ENCODE measurements at regions of chr1 and their contacts with region 1.

Region 1: GRCh38 chr1:204128964-204129896 is 22.6 kb downstream of the ETNK2 start:
- DNase-seq: peak; percentile 86
- H3K4me3 Mint-ChIP-seq: peak overlapping the region; percentile 68
- H3K27ac Mint-ChIP-seq: peak overlapping the region; percentile 63
- H3K4me1 Mint-ChIP-seq: peaks cover 58% of the 10 kb centered on the region
- H3K27me3 Mint-ChIP-seq: no peaks in the 10 kb centered on the region
- CTCF ChIP-seq: peak; percentile 100

Region 2: DNA sequence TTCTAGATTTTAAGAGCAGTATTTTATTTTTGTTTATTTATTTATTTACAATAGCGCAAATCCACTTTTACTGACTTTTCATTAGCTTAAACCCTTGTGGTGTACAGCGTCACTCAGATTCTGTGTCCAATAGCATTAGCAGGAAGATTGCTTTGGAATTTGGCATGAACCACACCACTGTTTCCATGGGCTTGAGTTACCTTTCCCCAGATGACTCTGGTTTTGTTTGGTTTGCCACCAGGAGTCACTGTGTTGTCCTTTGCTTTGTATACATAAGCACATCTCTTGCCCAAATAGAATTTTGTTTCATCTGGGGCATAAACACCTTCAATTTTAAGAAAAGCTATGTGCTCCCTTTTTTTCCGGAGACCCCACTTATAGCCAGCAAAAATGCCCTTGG is 293.7 kb before region 1 on chr1:
- CTCF ChIA-PET with region 1: interaction called, 12 read pairs
- POLR2A ChIA-PET with region 1: no interaction called
- intact Hi-C with region 1: no loop called
- DNase-seq: no peak
- H3K4me3 Mint-ChIP-seq: no peak overlapping the region
- H3K27ac Mint-ChIP-seq: no peak overlapping the region
- H3K4me1 Mint-ChIP-seq: no peaks in the 10 kb centered on the region
- H3K27me3 Mint-ChIP-seq: no peaks in the 10 kb centered on the region
- CTCF ChIP-seq: no peak

Region 3: GRCh38 chr1:203871107-203871875 is 257.9 kb before region 1 on chr1:
- CTCF ChIA-PET with region 1: interaction called, 452 read pairs
- POLR2A ChIA-PET with region 1: interaction called, 174 read pairs
- intact Hi-C with region 1: loop called (anchors 1 kb)
- DNase-seq: peak; percentile 86
- H3K4me3 Mint-ChIP-seq: no peak overlapping the region
- H3K27ac Mint-ChIP-seq: peak overlapping the region; percentile 74
- H3K4me1 Mint-ChIP-seq: peaks cover 3% of the 10 kb centered on the region
- H3K27me3 Mint-ChIP-seq: no peaks in the 10 kb centered on the region
- CTCF ChIP-seq: peak; percentile 100

Region 4: GRCh38 chr1:204059970-204060369 is 69.3 kb before region 1 on chr1:
- CTCF ChIA-PET with region 1: interaction called, 16 read pairs
- POLR2A ChIA-PET with region 1: no interaction called
- intact Hi-C with region 1: loop called (anchors 5 kb)
- DNase-seq: no peak
- H3K4me3 Mint-ChIP-seq: no peak overlapping the region
- H3K27ac Mint-ChIP-seq: no peak overlapping the region
- H3K4me1 Mint-ChIP-seq: peaks cover 21% of the 10 kb centered on the region
- H3K27me3 Mint-ChIP-seq: no peaks in the 10 kb centered on the region
- CTCF ChIP-seq: no peak

Region 5: GRCh38 chr1:204080163-204080903 is 48.9 kb before region 1 on chr1:
- CTCF ChIA-PET with region 1: interaction called, 59 read pairs
- POLR2A ChIA-PET with region 1: interaction called, 38 read pairs
- intact Hi-C with region 1: no loop called
- DNase-seq: peak; percentile 99
- H3K4me3 Mint-ChIP-seq: peak overlapping the region; percentile 19
- H3K27ac Mint-ChIP-seq: peak overlapping the region; percentile 4
- H3K4me1 Mint-ChIP-seq: peaks cover 51% of the 10 kb centered on the region
- H3K27me3 Mint-ChIP-seq: no peaks in the 10 kb centered on the region
- CTCF ChIP-seq: no peak

Region 6: DNA sequence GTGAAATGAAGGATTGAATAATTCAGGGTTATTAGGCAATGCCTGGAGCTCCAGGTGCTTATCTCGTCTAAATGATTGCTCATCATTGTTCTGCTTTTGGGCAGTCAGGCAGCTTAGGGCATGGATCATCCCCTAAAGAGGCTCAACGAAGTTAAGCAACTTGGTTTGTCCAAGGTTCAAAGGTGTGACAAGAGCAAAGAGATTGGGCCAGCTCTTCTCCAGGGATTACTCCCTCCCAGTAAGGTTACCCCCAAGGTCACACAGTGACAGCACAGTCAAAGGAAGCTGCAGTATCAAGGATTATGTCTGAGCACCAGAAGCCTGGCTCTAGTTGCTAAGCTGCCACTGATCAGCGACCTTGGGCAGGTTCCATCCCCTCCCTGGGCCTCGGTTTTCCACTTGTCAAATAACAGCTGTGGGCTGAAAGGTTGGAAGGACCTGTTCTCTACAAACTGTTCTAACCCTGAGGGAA is 15.8 kb after region 1 on chr1:
- CTCF ChIA-PET with region 1: interaction called, 90 read pairs
- POLR2A ChIA-PET with region 1: interaction called, 20 read pairs
- intact Hi-C with region 1: no loop called
- DNase-seq: no peak
- H3K4me3 Mint-ChIP-seq: no peak overlapping the region
- H3K27ac Mint-ChIP-seq: peak overlapping the region; percentile 41
- H3K4me1 Mint-ChIP-seq: peaks cover 41% of the 10 kb centered on the region
- H3K27me3 Mint-ChIP-seq: no peaks in the 10 kb centered on the region
- CTCF ChIP-seq: no peak

Region 7: GRCh38 chr1:204232526-204232925 is 103.3 kb after region 1 on chr1:
- CTCF ChIA-PET with region 1: no interaction called
- POLR2A ChIA-PET with region 1: no interaction called
- intact Hi-C with region 1: no loop called
- DNase-seq: no peak
- H3K4me3 Mint-ChIP-seq: no peak overlapping the region
- H3K27ac Mint-ChIP-seq: no peak overlapping the region
- H3K4me1 Mint-ChIP-seq: peaks cover 3% of the 10 kb centered on the region
- H3K27me3 Mint-ChIP-seq: no peaks in the 10 kb centered on the region
- CTCF ChIP-seq: no peak